ENCODE measurements at regions of chr5 and their contacts with region 1.

Region 1: GRCh38 chr5:14727428-14727865 is 62.9 kb downstream of the OTULIN start:
- DNase-seq: peak; percentile 48 to 87 (median 69)
- ATAC-seq: peak; percentile 88
- H3K4me3 ChIP-seq: no peak overlapping the region
- H3K4me3 Mint-ChIP-seq: no peak overlapping the region
- H3K27ac ChIP-seq: no peak overlapping the region
- H3K27ac Mint-ChIP-seq: peak overlapping the region; percentile 67
- H3K4me1 ChIP-seq: peaks cover 4% of the 10 kb centered on the region
- H3K4me1 Mint-ChIP-seq: peaks cover 11% of the 10 kb centered on the region
- H3K27me3 ChIP-seq: no peaks in the 10 kb centered on the region
- H3K27me3 Mint-ChIP-seq: no peaks in the 10 kb centered on the region
- CTCF ChIP-seq: peak; percentile 98

Region 2: GRCh38 chr5:14428302-14429081 is 299.0 kb before region 1 on chr5:
- CTCF ChIA-PET with region 1: no interaction called
- POLR2A ChIA-PET with region 1: no interaction called
- intact Hi-C with region 1: no loop called
- DNase-seq: no peak
- ATAC-seq: no peak
- H3K4me3 ChIP-seq: no peak overlapping the region
- H3K4me3 Mint-ChIP-seq: no peak overlapping the region
- H3K27ac ChIP-seq: no peak overlapping the region
- H3K27ac Mint-ChIP-seq: no peak overlapping the region
- H3K4me1 ChIP-seq: peaks cover 3% of the 10 kb centered on the region
- H3K4me1 Mint-ChIP-seq: peaks cover 13% of the 10 kb centered on the region
- H3K27me3 ChIP-seq: no peaks in the 10 kb centered on the region
- H3K27me3 Mint-ChIP-seq: no peaks in the 10 kb centered on the region
- CTCF ChIP-seq: no peak

Region 3: GRCh38 chr5:14640765-14641164 is 86.7 kb before region 1 on chr5:
- CTCF ChIA-PET with region 1: no interaction called
- POLR2A ChIA-PET with region 1: no interaction called
- intact Hi-C with region 1: no loop called
- DNase-seq: no peak
- ATAC-seq: no peak
- H3K4me3 ChIP-seq: no peak overlapping the region
- H3K4me3 Mint-ChIP-seq: no peak overlapping the region
- H3K27ac ChIP-seq: no peak overlapping the region
- H3K27ac Mint-ChIP-seq: no peak overlapping the region
- H3K4me1 ChIP-seq: no peaks in the 10 kb centered on the region
- H3K4me1 Mint-ChIP-seq: no peaks in the 10 kb centered on the region
- H3K27me3 ChIP-seq: peaks cover 0 to 3% of the 10 kb centered on the region in 2 experiments
- H3K27me3 Mint-ChIP-seq: peaks cover 26% of the 10 kb centered on the region
- CTCF ChIP-seq: no peak

Region 4: DNA sequence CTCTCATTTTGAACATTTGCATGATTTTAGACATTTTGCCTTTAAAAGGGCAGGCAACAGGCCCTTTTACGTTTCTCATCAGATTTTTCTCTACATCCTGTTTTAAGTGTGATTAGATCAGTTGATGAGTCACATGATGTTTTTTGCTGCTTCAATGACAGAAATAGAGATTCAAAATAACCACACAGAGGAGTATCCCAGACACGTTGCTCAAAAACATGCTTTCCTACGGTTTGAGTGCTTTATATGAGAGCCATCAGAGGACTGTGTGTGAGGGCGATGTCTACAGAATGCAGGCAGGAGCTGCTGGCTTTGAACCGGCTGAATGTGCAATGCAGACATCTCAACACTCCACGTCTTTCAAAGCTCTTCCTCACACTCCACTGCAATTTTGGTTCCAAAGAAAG is 20.8 kb before region 1 on chr5:
- CTCF ChIA-PET with region 1: interaction called, 12 read pairs
- POLR2A ChIA-PET with region 1: interaction called, 28 read pairs
- intact Hi-C with region 1: no loop called
- DNase-seq: peak; percentile 32 to 84 (median 57)
- ATAC-seq: peak; percentile 95
- H3K4me3 ChIP-seq: peak overlapping the region; percentile 7
- H3K4me3 Mint-ChIP-seq: peak overlapping the region; percentile 84
- H3K27ac ChIP-seq: peak overlapping the region; percentile 85 to 87
- H3K27ac Mint-ChIP-seq: peak overlapping the region; percentile 96
- H3K4me1 ChIP-seq: peaks cover 73% of the 10 kb centered on the region
- H3K4me1 Mint-ChIP-seq: peaks cover 93% of the 10 kb centered on the region
- H3K27me3 ChIP-seq: no peaks in the 10 kb centered on the region
- H3K27me3 Mint-ChIP-seq: no peaks in the 10 kb centered on the region
- CTCF ChIP-seq: no peak

Region 5: GRCh38 chr5:14895301-14895700 is 167.9 kb after region 1 on chr5:
- CTCF ChIA-PET with region 1: no interaction called
- POLR2A ChIA-PET with region 1: no interaction called
- intact Hi-C with region 1: loop called (anchors 1 to 5 kb)
- DNase-seq: peak in 4 of 14 experiments; percentile 13 to 29 (median 18)
- ATAC-seq: peak; percentile 59
- H3K4me3 ChIP-seq: no peak overlapping the region
- H3K4me3 Mint-ChIP-seq: no peak overlapping the region
- H3K27ac ChIP-seq: no peak overlapping the region
- H3K27ac Mint-ChIP-seq: no peak overlapping the region
- H3K4me1 ChIP-seq: no peaks in the 10 kb centered on the region
- H3K4me1 Mint-ChIP-seq: no peaks in the 10 kb centered on the region
- H3K27me3 ChIP-seq: no peaks in the 10 kb centered on the region
- H3K27me3 Mint-ChIP-seq: no peaks in the 10 kb centered on the region
- CTCF ChIP-seq: no peak

Region 6: DNA sequence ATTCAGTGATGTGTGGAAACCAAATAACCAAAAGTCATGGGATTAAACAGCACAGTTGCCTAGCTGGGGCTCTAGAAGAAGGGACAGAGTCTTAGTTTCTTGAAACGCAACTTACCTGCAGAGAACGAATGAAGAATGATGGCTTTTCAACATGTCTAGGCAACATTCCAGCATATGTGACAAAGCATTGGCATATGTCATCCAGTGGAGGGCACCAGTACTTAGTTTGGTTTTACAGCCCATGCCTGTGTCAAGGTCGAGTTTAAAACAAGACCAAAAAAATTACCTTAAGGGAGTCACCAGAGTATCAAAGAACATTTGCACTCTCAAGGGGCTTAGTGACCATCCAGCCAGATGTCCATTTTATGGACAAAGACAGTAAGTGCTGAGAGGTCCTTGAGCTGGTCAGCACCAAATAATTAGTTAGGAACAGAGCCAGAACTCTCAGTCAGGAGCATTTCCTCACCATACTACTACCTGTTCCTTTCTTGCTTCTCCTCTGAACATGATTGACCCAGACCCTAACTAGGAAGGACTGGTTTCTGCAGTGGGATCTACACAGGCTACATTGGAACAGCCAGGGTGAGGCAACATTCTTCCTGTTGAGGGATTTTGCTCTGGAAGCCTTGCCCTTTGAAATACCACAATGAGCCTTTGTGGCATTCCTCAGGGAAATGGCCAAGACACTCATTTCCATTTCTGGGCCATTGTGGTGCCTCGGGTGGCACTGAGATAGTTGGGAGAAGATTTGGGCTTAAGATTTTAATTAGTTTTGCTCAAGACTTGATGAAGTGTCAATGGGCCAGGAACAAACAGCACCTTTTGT is 219.6 kb after region 1 on chr5:
- CTCF ChIA-PET with region 1: no interaction called
- POLR2A ChIA-PET with region 1: no interaction called
- intact Hi-C with region 1: loop called in 1 of 2 experiments (anchors 5 kb)
- DNase-seq: peak in 11 of 14 experiments; percentile 7 to 79 (median 25)
- ATAC-seq: peak; percentile 99
- H3K4me3 ChIP-seq: no peak overlapping the region
- H3K4me3 Mint-ChIP-seq: no peak overlapping the region
- H3K27ac ChIP-seq: no peak overlapping the region
- H3K27ac Mint-ChIP-seq: no peak overlapping the region
- H3K4me1 ChIP-seq: no peaks in the 10 kb centered on the region
- H3K4me1 Mint-ChIP-seq: peaks cover 8% of the 10 kb centered on the region
- H3K27me3 ChIP-seq: no peaks in the 10 kb centered on the region
- H3K27me3 Mint-ChIP-seq: peaks cover 14% of the 10 kb centered on the region
- CTCF ChIP-seq: peak; percentile 58

Region 7: GRCh38 chr5:15003511-15003920 is 276.1 kb after region 1 on chr5:
- CTCF ChIA-PET with region 1: interaction called, 18 read pairs
- POLR2A ChIA-PET with region 1: interaction called, 3 read pairs
- intact Hi-C with region 1: loop called (anchors 1 kb)
- DNase-seq: peak; percentile 23 to 84 (median 40)
- ATAC-seq: peak; percentile 100
- H3K4me3 ChIP-seq: no peak overlapping the region
- H3K4me3 Mint-ChIP-seq: no peak overlapping the region
- H3K27ac ChIP-seq: no peak overlapping the region
- H3K27ac Mint-ChIP-seq: no peak overlapping the region
- H3K4me1 ChIP-seq: no peaks in the 10 kb centered on the region
- H3K4me1 Mint-ChIP-seq: peaks cover 6% of the 10 kb centered on the region
- H3K27me3 ChIP-seq: no peaks in the 10 kb centered on the region
- H3K27me3 Mint-ChIP-seq: no peaks in the 10 kb centered on the region
- CTCF ChIP-seq: peak; percentile 81

Region 8: DNA sequence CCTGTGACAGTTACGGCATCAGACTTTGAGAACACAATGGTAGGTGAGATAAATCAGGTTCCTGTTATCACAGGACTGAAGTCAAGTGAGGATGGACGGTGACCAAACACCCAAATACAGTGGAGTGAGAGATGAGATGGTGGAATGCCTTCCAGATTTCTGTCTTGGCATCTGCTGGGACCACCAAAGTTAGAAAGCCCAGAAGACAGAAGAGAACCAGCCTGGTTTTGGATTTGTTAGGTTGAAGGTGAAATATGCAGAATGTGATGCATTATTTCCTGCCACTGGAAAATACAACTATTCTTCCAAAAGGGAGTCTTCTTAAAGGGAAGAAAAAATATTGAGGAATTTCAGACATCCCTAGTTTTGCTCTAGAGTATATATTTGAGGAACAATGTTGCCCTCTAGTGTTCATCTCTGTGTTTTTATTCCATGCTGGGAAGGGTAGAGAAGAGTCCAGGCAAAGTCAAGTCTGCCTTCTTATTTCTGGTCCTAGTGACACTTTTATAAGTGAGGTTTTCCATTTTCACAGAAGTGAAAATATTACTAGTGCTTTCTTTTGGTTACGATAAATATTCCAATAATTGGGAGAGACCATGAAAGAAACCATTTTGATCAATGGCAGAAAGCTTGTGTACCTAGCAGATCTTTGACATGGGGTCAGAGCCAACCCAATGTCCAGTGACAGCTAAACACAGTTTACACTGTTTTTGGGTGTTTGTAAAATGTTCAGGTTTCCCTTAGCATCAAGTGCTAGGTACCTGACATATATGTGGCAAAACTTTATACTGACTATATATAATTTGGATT is 286.4 kb after region 1 on chr5:
- CTCF ChIA-PET with region 1: interaction called, 4 read pairs
- POLR2A ChIA-PET with region 1: no interaction called
- intact Hi-C with region 1: loop called in 1 of 2 experiments (anchors 1 kb)
- DNase-seq: peak in 3 of 14 experiments; percentile 52 to 59 (median 57)
- ATAC-seq: peak; percentile 55
- H3K4me3 ChIP-seq: no peak overlapping the region
- H3K4me3 Mint-ChIP-seq: no peak overlapping the region
- H3K27ac ChIP-seq: no peak overlapping the region
- H3K27ac Mint-ChIP-seq: no peak overlapping the region
- H3K4me1 ChIP-seq: no peaks in the 10 kb centered on the region
- H3K4me1 Mint-ChIP-seq: no peaks in the 10 kb centered on the region
- H3K27me3 ChIP-seq: no peaks in the 10 kb centered on the region
- H3K27me3 Mint-ChIP-seq: no peaks in the 10 kb centered on the region
- CTCF ChIP-seq: peak; percentile 85

Region 9: GRCh38 chr5:15056988-15057592 is 329.6 kb after region 1 on chr5:
- CTCF ChIA-PET with region 1: no interaction called
- POLR2A ChIA-PET with region 1: no interaction called
- intact Hi-C with region 1: no loop called
- DNase-seq: no peak
- ATAC-seq: no peak
- H3K4me3 ChIP-seq: no peak overlapping the region
- H3K4me3 Mint-ChIP-seq: no peak overlapping the region
- H3K27ac ChIP-seq: no peak overlapping the region
- H3K27ac Mint-ChIP-seq: no peak overlapping the region
- H3K4me1 ChIP-seq: no peaks in the 10 kb centered on the region
- H3K4me1 Mint-ChIP-seq: no peaks in the 10 kb centered on the region
- H3K27me3 ChIP-seq: peaks cover 2 to 5% of the 10 kb centered on the region in 2 experiments
- H3K27me3 Mint-ChIP-seq: peaks cover 16% of the 10 kb centered on the region
- CTCF ChIP-seq: no peak

Region 10: GRCh38 chr5:15151653-15152052 is 424.2 kb after region 1 on chr5:
- CTCF ChIA-PET with region 1: no interaction called
- POLR2A ChIA-PET with region 1: no interaction called
- intact Hi-C with region 1: no loop called
- DNase-seq: no peak
- ATAC-seq: no peak
- H3K4me3 ChIP-seq: no peak overlapping the region
- H3K4me3 Mint-ChIP-seq: no peak overlapping the region
- H3K27ac ChIP-seq: no peak overlapping the region
- H3K27ac Mint-ChIP-seq: no peak overlapping the region
- H3K4me1 ChIP-seq: no peaks in the 10 kb centered on the region
- H3K4me1 Mint-ChIP-seq: no peaks in the 10 kb centered on the region
- H3K27me3 ChIP-seq: no peaks in the 10 kb centered on the region
- H3K27me3 Mint-ChIP-seq: no peaks in the 10 kb centered on the region
- CTCF ChIP-seq: no peak

Measured in CD4-positive, alpha-beta T cell (primary cell).